Naive thymus-derived CD4-positive, alpha-beta T cell (primary cell): ENCODE measurements at regions of chr11 and their contacts with region 1.

Region 1: GRCh38 chr11:33996498-33997454 is 54.8 kb upstream of the CAPRIN1 start:
- DNase-seq: peak; percentile 42 to 79 (median 71)
- ATAC-seq: peak; percentile 99
- H3K4me3 ChIP-seq: no peak overlapping the region
- H3K4me3 Mint-ChIP-seq: peak overlapping the region in 7 of 10 donors; percentile 31 to 74 (median 59)
- H3K27ac ChIP-seq: no peak overlapping the region
- H3K27ac Mint-ChIP-seq: no peak overlapping the region
- H3K4me1 ChIP-seq: peaks cover 0 to 3% of the 10 kb centered on the region in 2 donors
- H3K4me1 Mint-ChIP-seq: peaks cover 0 to 10% (median 9%) of the 10 kb centered on the region in 7 donors
- H3K27me3 ChIP-seq: peaks cover 0 to 5% of the 10 kb centered on the region in 2 donors
- H3K27me3 Mint-ChIP-seq: peaks cover 12 to 33% (median 18%) of the 10 kb centered on the region in 5 donors

Region 2: GRCh38 chr11:33606762-33607161 is 390.0 kb before region 1 on chr11:
- CTCF ChIA-PET with region 1: no interaction called
- POLR2A ChIA-PET with region 1: no interaction called
- intact Hi-C with region 1: no loop called
- DNase-seq: no peak
- ATAC-seq: no peak
- H3K4me3 ChIP-seq: no peak overlapping the region
- H3K4me3 Mint-ChIP-seq: no peak overlapping the region
- H3K27ac ChIP-seq: no peak overlapping the region
- H3K27ac Mint-ChIP-seq: no peak overlapping the region
- H3K4me1 ChIP-seq: no peaks in the 10 kb centered on the region
- H3K4me1 Mint-ChIP-seq: no peaks in the 10 kb centered on the region
- H3K27me3 ChIP-seq: no peaks in the 10 kb centered on the region
- H3K27me3 Mint-ChIP-seq: peaks cover 6 to 29% (median 14%) of the 10 kb centered on the region in 5 donors

Region 3: GRCh38 chr11:34068111-34068510 is 71.3 kb after region 1 on chr11:
- CTCF ChIA-PET with region 1: interaction called, 4 read pairs
- POLR2A ChIA-PET with region 1: no interaction called
- intact Hi-C with region 1: loop called (anchors 2 to 5 kb)
- DNase-seq: no peak
- ATAC-seq: no peak
- H3K4me3 ChIP-seq: no peak overlapping the region
- H3K4me3 Mint-ChIP-seq: peak overlapping the region in 5 of 10 donors; percentile 1 to 48 (median 12)
- H3K27ac ChIP-seq: no peak overlapping the region
- H3K27ac Mint-ChIP-seq: peak overlapping the region in 5 of 9 donors; percentile 1 to 56 (median 17)
- H3K4me1 ChIP-seq: peaks cover 9 to 14% of the 10 kb centered on the region in 2 donors
- H3K4me1 Mint-ChIP-seq: peaks cover 28 to 76% (median 64%) of the 10 kb centered on the region in 7 donors
- H3K27me3 ChIP-seq: no peaks in the 10 kb centered on the region
- H3K27me3 Mint-ChIP-seq: no peaks in the 10 kb centered on the region

Region 4: GRCh38 chr11:34075178-34075820 is 78.5 kb after region 1 on chr11:
- CTCF ChIA-PET with region 1: interaction called, 3 read pairs
- POLR2A ChIA-PET with region 1: no interaction called
- intact Hi-C with region 1: loop called (anchors 2 to 5 kb)
- DNase-seq: no peak
- ATAC-seq: no peak
- H3K4me3 ChIP-seq: no peak overlapping the region
- H3K4me3 Mint-ChIP-seq: no peak overlapping the region
- H3K27ac ChIP-seq: peak overlapping the region; percentile 47
- H3K27ac Mint-ChIP-seq: peak overlapping the region in 7 of 9 donors; percentile 0 to 84 (median 52)
- H3K4me1 ChIP-seq: peaks cover 7 to 12% of the 10 kb centered on the region in 2 donors
- H3K4me1 Mint-ChIP-seq: peaks cover 8 to 51% (median 48%) of the 10 kb centered on the region in 7 donors
- H3K27me3 ChIP-seq: no peaks in the 10 kb centered on the region
- H3K27me3 Mint-ChIP-seq: no peaks in the 10 kb centered on the region

Region 5: GRCh38 chr11:34086554-34087283 is 89.9 kb after region 1 on chr11:
- CTCF ChIA-PET with region 1: interaction called, 5 read pairs
- POLR2A ChIA-PET with region 1: no interaction called
- intact Hi-C with region 1: loop called in 1 of 2 experiments (anchors 5 kb)
- DNase-seq: peak in 2 of 9 donors; percentile 18 to 31
- ATAC-seq: peak; percentile 65
- H3K4me3 ChIP-seq: no peak overlapping the region
- H3K4me3 Mint-ChIP-seq: peak overlapping the region in 6 of 10 donors; percentile 5 to 35 (median 28)
- H3K27ac ChIP-seq: peak overlapping the region; percentile 31
- H3K27ac Mint-ChIP-seq: peak overlapping the region; percentile 32 to 91 (median 76)
- H3K4me1 ChIP-seq: peaks cover 0 to 3% of the 10 kb centered on the region in 2 donors
- H3K4me1 Mint-ChIP-seq: peaks cover 3 to 30% (median 18%) of the 10 kb centered on the region in 7 donors
- H3K27me3 ChIP-seq: no peaks in the 10 kb centered on the region
- H3K27me3 Mint-ChIP-seq: no peaks in the 10 kb centered on the region

Region 6: GRCh38 chr11:34468209-34468841 is 471.5 kb after region 1 on chr11:
- CTCF ChIA-PET with region 1: no interaction called
- POLR2A ChIA-PET with region 1: no interaction called
- intact Hi-C with region 1: loop called in 1 of 2 experiments (anchors 2 kb)
- DNase-seq: peak in 6 of 9 donors; percentile 9 to 48 (median 32)
- ATAC-seq: peak; percentile 71
- H3K4me3 ChIP-seq: no peak overlapping the region
- H3K4me3 Mint-ChIP-seq: no peak overlapping the region
- H3K27ac ChIP-seq: no peak overlapping the region
- H3K27ac Mint-ChIP-seq: peak overlapping the region in 3 of 9 donors; percentile 1 to 62 (median 46)
- H3K4me1 ChIP-seq: no peaks in the 10 kb centered on the region
- H3K4me1 Mint-ChIP-seq: peaks cover 0 to 11% (median 4%) of the 10 kb centered on the region in 7 donors
- H3K27me3 ChIP-seq: no peaks in the 10 kb centered on the region
- H3K27me3 Mint-ChIP-seq: no peaks in the 10 kb centered on the region

Region 7: DNA sequence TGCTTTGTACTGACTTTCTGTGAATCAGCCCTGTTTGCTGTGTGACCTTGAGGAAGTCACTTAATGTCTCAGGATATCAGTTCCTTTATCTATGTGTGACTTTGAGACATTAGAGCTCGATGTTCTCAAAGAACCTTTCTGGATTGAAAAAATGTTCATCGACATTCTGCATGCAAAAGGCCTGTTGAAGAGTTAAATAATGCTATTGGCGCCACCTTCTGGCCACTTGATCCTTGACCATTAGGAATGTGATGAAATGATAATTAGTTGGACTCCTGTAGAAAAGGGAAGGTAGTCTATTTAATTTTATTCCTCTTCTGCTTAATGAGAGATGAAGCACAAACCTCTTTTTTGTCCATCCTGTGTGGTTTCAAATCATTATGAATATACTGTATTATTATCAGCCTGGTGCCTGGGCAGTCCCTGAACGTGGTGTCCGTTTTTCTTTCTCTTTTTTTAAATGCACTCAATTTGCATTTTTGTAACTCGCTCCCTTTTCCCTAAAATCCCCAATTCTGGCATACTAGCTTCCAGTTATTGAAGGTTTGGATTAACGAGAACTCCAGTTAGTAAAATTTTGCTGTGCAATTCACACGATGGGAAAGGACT is 496.1 kb after region 1 on chr11:
- CTCF ChIA-PET with region 1: interaction called, 3 read pairs
- POLR2A ChIA-PET with region 1: no interaction called
- intact Hi-C with region 1: loop called (anchors 1 to 5 kb)
- DNase-seq: peak in 3 of 9 donors; percentile 7 to 19 (median 14)
- ATAC-seq: peak; percentile 38
- H3K4me3 ChIP-seq: no peak overlapping the region
- H3K4me3 Mint-ChIP-seq: no peak overlapping the region
- H3K27ac ChIP-seq: no peak overlapping the region
- H3K27ac Mint-ChIP-seq: no peak overlapping the region
- H3K4me1 ChIP-seq: no peaks in the 10 kb centered on the region
- H3K4me1 Mint-ChIP-seq: peaks cover 0 to 3% (median 0%) of the 10 kb centered on the region in 7 donors
- H3K27me3 ChIP-seq: no peaks in the 10 kb centered on the region
- H3K27me3 Mint-ChIP-seq: peaks cover 0 to 10% (median 3%) of the 10 kb centered on the region in 5 donors